Right ventricle myocardium inferior (tissue), 1 donor: ENCODE measurements at regions of chr19 and their contacts with region 1.

Region 1: GRCh38 chr19:43743022-43743421 is 11.7 kb downstream of the SMG9 start:
- DNase-seq: no peak
- ATAC-seq: no peak

Region 2: DNA sequence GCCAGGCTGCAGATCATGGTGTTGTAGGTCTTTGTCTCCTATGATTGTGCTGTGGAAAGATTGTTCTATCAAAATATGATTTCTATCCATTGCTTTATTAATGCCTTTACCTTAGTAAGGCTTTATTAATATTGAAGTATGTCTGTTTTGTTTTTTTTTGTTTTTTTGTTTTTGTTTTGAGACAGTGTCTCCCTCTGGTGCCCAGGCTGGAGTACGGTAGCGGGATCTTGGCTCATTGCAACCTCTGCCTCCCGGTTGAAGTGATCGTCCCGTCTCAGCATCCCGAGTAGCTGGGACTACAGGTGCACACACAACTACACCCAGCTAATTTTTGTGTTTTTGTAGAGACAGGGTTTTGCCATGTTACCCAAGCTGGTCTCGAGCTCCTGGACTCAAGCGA is 19.4 kb before region 1 on chr19:
- intact Hi-C with region 1: no loop called
- DNase-seq: no peak
- ATAC-seq: no peak

Region 3: DNA sequence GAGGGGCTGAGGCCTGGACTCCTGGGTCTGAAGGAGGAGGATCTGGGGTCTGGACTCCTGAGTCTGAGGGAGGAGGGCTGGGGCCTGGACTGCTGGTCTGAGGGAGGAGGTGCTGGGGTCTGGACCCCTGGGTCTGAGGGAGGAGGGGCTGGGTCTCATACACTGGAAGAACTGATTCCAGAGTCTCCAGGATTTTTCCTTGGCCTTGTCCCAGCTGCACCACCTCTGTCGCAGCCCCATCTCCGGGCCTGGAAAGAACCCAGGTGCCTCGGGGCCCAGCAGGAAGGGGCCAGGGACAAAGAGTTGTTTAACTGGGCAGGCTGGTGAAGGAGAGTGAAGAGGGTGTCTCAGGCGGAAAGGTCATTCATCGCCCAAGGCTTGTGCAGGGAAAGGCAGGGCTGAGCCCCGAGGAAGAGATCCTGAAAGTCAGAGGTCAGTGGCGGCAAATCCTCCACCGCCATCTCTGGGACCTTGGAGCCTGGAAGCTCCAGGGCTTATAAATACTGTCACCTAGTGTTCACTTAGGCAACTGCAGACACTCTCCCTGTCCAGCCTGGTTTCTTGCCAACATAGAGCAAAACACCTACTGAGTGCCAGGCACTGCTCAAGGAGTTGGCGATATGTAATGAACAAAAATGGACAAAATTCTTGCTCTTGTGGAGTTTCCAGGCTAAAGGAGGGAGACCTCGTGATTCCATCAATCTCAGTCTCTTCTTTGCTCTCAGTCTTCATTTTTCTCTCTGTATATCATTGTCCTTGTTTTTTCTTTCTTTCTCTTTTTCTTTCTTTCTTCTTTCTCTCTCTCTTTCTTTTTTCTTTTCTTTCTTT is 42.2 kb after region 1 on chr19:
- intact Hi-C with region 1: loop called (anchors 1 kb)
- DNase-seq: no peak
- ATAC-seq: peak; percentile 82

Region 4: GRCh38 chr19:43847884-43848283 is 104.9 kb after region 1 on chr19:
- intact Hi-C with region 1: no loop called
- DNase-seq: no peak
- ATAC-seq: no peak